ENCODE measurements at regions of chr6 and their contacts with region 1.

Region 1: GRCh38 chr6:13702809-13703302 is 8.8 kb downstream of the RANBP9 start:
- DNase-seq: no peak
- H3K4me3 Mint-ChIP-seq: no peak overlapping the region
- H3K27ac Mint-ChIP-seq: no peak overlapping the region
- H3K4me1 Mint-ChIP-seq: peaks cover 31% of the 10 kb centered on the region
- H3K27me3 Mint-ChIP-seq: no peaks in the 10 kb centered on the region

Region 2: DNA sequence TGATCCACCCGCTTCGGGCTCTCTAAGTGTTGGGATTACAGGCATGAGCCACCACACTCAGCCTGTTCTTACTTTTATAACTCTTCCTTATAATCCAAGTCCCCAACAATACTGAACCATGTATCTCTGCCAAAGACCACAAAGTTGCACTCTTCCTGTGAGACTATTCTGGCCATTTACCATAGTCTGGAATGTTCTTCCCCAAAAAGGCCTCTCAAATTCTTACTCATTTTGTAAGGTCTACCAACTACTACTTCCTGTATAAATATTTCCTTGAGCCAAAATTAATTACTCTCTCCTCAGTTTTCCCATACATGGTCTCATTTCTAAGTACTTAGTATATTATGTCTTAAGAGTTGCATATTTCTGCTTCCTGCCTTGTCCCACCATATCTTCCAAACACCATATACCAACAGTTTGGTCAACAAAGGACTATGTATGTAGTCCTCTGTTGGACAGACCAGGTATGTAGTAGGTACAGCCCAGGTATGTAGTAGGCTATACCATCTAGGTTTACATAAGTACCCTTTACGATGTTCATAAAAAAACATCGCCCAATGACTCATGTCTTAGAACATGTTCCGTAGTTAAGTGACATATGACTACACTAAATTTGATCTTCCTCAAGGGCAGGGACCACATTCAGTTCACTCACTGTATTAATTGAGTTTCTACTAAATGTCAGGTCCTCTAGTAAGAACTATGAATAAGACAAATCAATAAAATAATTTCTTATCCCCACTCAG is 13.2 kb before region 1 on chr6:
- CTCF ChIA-PET with region 1: interaction called, 7 read pairs
- POLR2A ChIA-PET with region 1: interaction called, 5 read pairs
- intact Hi-C with region 1: loop called (anchors 1 kb)
- DNase-seq: no peak
- H3K4me3 Mint-ChIP-seq: no peak overlapping the region
- H3K27ac Mint-ChIP-seq: peak overlapping the region; percentile 59
- H3K4me1 Mint-ChIP-seq: peaks cover 64% of the 10 kb centered on the region
- H3K27me3 Mint-ChIP-seq: no peaks in the 10 kb centered on the region